ENCODE measurements at regions of chr10 and their contacts with region 1.

Region 1: DNA sequence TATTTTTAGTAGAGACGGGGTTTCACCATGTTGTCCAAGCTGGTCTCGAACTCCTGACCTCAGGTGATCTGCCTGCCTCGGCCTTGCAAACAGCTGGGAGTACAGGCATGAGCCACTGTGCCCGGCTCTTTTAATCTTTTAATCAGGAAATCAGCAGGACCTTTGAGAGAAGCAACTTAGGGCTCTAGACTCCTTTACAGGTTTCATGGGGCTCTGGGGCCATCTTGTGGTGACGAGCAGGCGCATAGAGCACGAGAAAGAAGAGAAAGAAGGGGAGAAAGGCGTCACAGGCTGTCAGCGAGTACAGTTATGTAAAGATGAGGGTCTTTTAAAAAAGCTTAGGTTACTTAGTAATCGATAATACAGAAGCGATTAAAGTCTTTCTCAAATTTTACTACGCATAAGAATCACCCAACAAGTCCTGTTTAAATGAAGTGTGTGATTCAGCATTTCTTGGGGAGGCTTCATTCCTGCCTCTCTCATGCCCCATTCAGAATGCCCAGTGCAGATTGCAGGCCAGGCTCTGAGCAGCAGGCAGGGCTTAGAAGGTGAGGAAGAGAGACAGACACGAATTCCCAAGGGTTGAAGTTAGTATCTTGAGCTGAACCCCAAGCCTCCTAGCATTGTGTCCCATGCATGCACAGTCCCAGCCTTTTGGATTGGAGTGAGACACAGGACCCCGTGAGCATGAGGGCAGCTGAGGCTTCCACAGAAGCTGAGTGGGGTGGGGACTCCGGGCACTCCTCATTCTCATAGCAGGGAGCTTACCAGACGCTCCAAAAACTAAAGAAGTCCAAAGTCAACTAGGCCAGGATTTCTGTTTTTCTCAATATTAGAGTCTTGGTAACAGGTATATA is 23.6 kb upstream of the PFKP start:
- DNase-seq: peak; percentile 35 to 82 (median 68)
- H3K4me3 ChIP-seq: no peak overlapping the region
- H3K27ac ChIP-seq: no peak overlapping the region
- H3K4me1 ChIP-seq: peaks cover 0 to 11% of the 10 kb centered on the region in 2 donors
- H3K27me3 ChIP-seq: no peaks in the 10 kb centered on the region
- CTCF ChIP-seq: peak; percentile 35 to 72 (median 64)
- POLR2A ChIP-seq: no peak

Region 2: DNA sequence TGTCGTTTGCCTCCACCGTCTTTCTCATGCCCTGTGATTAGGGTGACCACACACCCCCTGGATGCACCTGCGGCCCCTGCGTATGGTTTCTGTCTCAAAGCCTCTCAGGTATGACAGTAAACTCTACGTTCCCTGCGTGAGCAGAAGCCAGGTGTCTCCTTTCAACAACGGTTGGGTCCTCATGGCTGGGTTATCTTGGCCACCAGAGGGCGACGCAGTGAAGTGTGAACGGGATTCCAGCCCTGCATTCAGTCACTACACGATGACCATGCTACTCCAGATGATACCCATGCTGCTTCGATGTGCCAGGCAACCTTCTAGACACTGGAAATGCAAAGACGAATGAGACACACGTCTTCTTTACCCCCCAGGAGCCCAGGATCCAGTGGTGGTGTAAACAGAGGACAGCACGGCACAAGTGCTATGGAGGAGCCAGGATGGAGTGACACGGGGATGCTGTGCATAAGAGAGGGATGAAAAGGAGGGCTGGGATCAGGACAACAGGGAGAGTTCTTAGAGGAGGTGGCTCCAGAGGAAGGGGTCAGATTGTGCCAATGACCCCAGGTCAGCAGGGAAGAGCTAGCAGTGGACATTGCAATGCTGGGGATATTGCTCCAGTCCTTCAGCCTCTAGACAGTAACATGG is 204.5 kb before region 1 on chr10:
- intact Hi-C with region 1: loop called in 1 of 2 experiments (anchors 10 kb)
- DNase-seq: peak in 6 of 7 donors; percentile 19 to 62 (median 42)
- H3K4me3 ChIP-seq: no peak overlapping the region
- H3K27ac ChIP-seq: no peak overlapping the region
- H3K4me1 ChIP-seq: no peaks in the 10 kb centered on the region
- H3K27me3 ChIP-seq: peaks cover 5% of the 10 kb centered on the region
- CTCF ChIP-seq: peak; percentile 30 to 54 (median 43)
- POLR2A ChIP-seq: no peak

Region 3: GRCh38 chr10:2927958-2928840 is 115.5 kb before region 1 on chr10:
- intact Hi-C with region 1: loop called (anchors 5 to 10 kb)
- DNase-seq: peak; percentile 38 to 84 (median 71)
- H3K4me3 ChIP-seq: no peak overlapping the region
- H3K27ac ChIP-seq: no peak overlapping the region
- H3K4me1 ChIP-seq: no peaks in the 10 kb centered on the region
- H3K27me3 ChIP-seq: peaks cover 8% of the 10 kb centered on the region
- CTCF ChIP-seq: peak; percentile 59 to 74 (median 66)
- POLR2A ChIP-seq: no peak

Region 4: GRCh38 chr10:2938869-2939268 is 104.9 kb before region 1 on chr10:
- intact Hi-C with region 1: loop called in 1 of 2 experiments (anchors 10 kb)
- DNase-seq: no peak
- H3K4me3 ChIP-seq: no peak overlapping the region
- H3K27ac ChIP-seq: no peak overlapping the region
- H3K4me1 ChIP-seq: no peaks in the 10 kb centered on the region
- H3K27me3 ChIP-seq: no peaks in the 10 kb centered on the region
- CTCF ChIP-seq: no peak
- POLR2A ChIP-seq: no peak

Region 5: GRCh38 chr10:3213208-3213607 is 169.5 kb after region 1 on chr10:
- intact Hi-C with region 1: no loop called
- DNase-seq: no peak
- H3K4me3 ChIP-seq: no peak overlapping the region
- H3K27ac ChIP-seq: no peak overlapping the region
- H3K4me1 ChIP-seq: no peaks in the 10 kb centered on the region
- H3K27me3 ChIP-seq: peaks cover 3% of the 10 kb centered on the region
- CTCF ChIP-seq: no peak
- POLR2A ChIP-seq: no peak

Region 6: GRCh38 chr10:3226960-3227744 is 183.4 kb after region 1 on chr10:
- intact Hi-C with region 1: no loop called
- DNase-seq: no peak
- H3K4me3 ChIP-seq: no peak overlapping the region
- H3K27ac ChIP-seq: no peak overlapping the region
- H3K4me1 ChIP-seq: no peaks in the 10 kb centered on the region
- H3K27me3 ChIP-seq: no peaks in the 10 kb centered on the region
- CTCF ChIP-seq: no peak
- POLR2A ChIP-seq: no peak

Measured in adrenal gland (tissue), 19 donors.